Endothelial cell of umbilical vein (primary cell): ENCODE measurements at regions of chr14 and their contacts with region 1.

Region 1: GRCh38 chr14:101098641-101099040 is 195.1 kb upstream of the RTL1 start:
- DNase-seq: peak; percentile 98
- H3K4me3 ChIP-seq: peak overlapping the region in 1 of 3 experiments; percentile 43
- H3K27ac ChIP-seq: peak overlapping the region; percentile 91
- H3K4me1 ChIP-seq: peaks cover 29% of the 10 kb centered on the region
- H3K27me3 ChIP-seq: no peaks in the 10 kb centered on the region
- CTCF ChIP-seq: no peak
- POLR2A ChIP-seq: peak; percentile 88

Region 2: DNA sequence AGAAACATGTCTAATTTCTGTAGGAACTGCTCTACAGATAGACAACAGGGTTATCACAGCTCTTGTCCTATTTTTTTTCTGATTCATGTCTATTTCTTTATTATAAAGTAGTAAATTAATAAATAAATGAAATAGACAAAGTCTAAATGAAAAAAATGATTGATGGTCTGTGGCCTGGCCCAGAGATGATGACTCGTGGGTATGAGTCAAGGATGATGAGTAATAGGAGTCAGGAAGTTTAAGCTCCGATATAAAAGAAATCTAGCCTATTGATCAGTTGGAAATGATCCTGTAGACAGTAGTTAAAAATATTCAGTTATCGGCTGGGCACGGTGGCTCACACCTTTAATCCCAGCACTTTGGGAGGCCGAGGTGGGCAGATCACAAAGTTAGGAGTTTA is 104.6 kb before region 1 on chr14:
- CTCF ChIA-PET with region 1: no interaction called
- POLR2A ChIA-PET with region 1: no interaction called
- dilution Hi-C with region 1: no loop called
- intact Hi-C with region 1: loop called (anchors 5 kb)
- DNase-seq: peak; percentile 38
- H3K4me3 ChIP-seq: no peak overlapping the region
- H3K27ac ChIP-seq: no peak overlapping the region
- H3K4me1 ChIP-seq: peaks cover 8% of the 10 kb centered on the region
- H3K27me3 ChIP-seq: no peaks in the 10 kb centered on the region
- CTCF ChIP-seq: no peak
- POLR2A ChIP-seq: no peak

Region 3: DNA sequence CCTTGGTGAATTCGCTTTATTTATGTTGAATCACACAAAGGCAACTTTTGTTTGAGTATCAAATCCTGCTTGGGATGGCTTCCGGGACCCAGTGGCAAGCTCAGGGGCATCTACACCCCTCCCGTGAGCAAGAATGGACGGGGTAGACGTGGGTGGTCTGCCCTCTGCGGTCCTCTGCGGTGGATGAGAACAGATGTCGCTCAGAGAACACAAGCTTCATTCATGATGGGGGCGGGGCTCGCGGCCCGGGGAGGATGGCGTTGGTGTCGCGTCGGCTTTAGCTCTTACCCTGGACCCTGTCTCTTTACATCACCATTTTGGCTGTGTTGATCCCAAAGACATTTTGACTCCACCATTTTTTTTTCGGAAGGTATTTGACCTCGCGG is 36.6 kb before region 1 on chr14:
- CTCF ChIA-PET with region 1: no interaction called
- POLR2A ChIA-PET with region 1: no interaction called
- dilution Hi-C with region 1: no loop called
- intact Hi-C with region 1: loop called (anchors 1 kb)
- DNase-seq: no peak
- H3K4me3 ChIP-seq: no peak overlapping the region
- H3K27ac ChIP-seq: peak overlapping the region; percentile 77
- H3K4me1 ChIP-seq: peaks cover 42% of the 10 kb centered on the region
- H3K27me3 ChIP-seq: no peaks in the 10 kb centered on the region
- CTCF ChIP-seq: no peak
- POLR2A ChIP-seq: no peak

Region 4: GRCh38 chr14:101147848-101148826 is 49.5 kb after region 1 on chr14:
- CTCF ChIA-PET with region 1: no interaction called
- POLR2A ChIA-PET with region 1: no interaction called
- dilution Hi-C with region 1: no loop called
- intact Hi-C with region 1: loop called (anchors 1 kb)
- DNase-seq: peak; percentile 71
- H3K4me3 ChIP-seq: no peak overlapping the region
- H3K27ac ChIP-seq: peak overlapping the region; percentile 79
- H3K4me1 ChIP-seq: peaks cover 43% of the 10 kb centered on the region
- H3K27me3 ChIP-seq: no peaks in the 10 kb centered on the region
- CTCF ChIP-seq: no peak
- POLR2A ChIP-seq: no peak